ENCODE measurements at regions of chr14 and their contacts with region 1.

Region 1: GRCh38 chr14:54652188-54652587 is 85.3 kb downstream of the SAMD4A start:
- DNase-seq: peak; percentile 98
- H3K4me3 ChIP-seq: peak overlapping the region; percentile 24
- CTCF ChIP-seq: no peak

Region 2: GRCh38 chr14:54566410-54567223 is 85.6 kb before region 1 on chr14 and contains the start of gene SAMD4A:
- in situ Hi-C with region 1: loop called (anchors 5 kb)
- DNase-seq: peak; percentile 66
- H3K4me3 ChIP-seq: peak within 1 kb of the TSS; percentile 74
- CTCF ChIP-seq: peak; percentile 19

Measured in astrocyte of the cerebellum (primary cell).